Activated T-helper 2 cell treated with anti-CD3 and anti-CD28 coated beads, Interferon-gamma antibody, Interleukin-2, Interleukin-4, amounts not matched to agents 10 μg/mL and 5 μg/mL and 100 μg/mL, durations not matched to agents 14 hours and 24 hours and 36 hours (primary cell): ENCODE measurements at regions of chr20 and their contacts with region 1.

Region 1: DNA sequence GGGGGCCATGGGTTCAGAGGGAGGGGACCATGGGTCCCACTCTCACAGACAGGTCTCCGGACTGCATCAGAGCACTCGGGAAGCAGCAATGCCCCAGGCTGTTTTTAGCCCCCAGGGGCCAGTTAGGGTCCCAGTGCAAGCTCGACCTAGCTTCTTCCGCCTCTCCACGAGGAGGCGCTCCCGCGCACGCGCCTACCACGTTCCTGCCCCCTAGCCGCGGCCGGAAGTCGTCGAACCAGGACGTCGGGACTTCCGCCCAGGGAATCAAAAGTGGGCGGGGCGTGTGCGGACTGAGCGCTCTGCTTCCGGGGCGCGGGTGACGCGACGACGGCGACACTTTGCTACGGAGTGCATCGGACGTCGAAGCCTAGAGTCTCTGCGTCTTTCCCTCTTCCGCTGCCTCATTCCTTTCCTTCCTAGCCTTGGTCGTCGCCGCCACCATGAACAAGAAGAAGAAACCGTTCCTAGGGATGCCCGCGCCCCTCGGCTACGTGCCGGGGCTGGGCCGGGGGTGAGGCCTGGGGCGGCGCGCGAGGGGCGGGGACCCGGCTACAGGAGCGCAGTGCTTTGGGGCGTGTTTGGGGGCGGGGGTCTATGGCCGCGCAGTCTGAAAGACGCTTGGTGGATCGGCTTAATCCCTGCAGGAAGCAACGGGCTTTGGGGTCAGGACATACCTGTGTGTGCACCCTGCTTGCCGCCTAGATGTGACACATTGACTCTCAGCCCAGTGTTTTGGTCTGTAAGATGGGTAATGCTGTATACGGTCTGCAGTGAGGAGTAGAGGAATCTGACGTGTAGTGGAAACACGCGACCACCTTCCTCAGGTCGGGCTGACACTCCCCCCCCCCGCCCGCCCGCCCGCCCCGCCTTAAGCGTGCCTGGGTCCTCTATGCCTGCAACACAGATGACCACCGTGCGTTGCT is at the start of gene PRPF6:
- DNase-seq: peak; percentile 93
- H3K4me3 Mint-ChIP-seq: peak within 1 kb of the TSS; percentile 96
- H3K27ac Mint-ChIP-seq: peak within 1 kb of the TSS; percentile 99
- H3K4me1 Mint-ChIP-seq: peaks cover 55% of the 10 kb centered on the region
- H3K27me3 Mint-ChIP-seq: no peaks in the 10 kb centered on the region
- total RNA-seq, gene PRPF6: 68.9 and 70.3 TPM in 2 replicates

Region 2: GRCh38 chr20:63657937-63658748 is 322.9 kb before region 1 on chr20 and contains the start of gene RTEL1:
- intact Hi-C with region 1: loop called (anchors 5 kb)
- DNase-seq: peak; percentile 87
- H3K4me3 Mint-ChIP-seq: peak within 1 kb of the TSS; percentile 92
- H3K27ac Mint-ChIP-seq: peak within 1 kb of the TSS; percentile 86
- H3K4me1 Mint-ChIP-seq: peaks cover 18% of the 10 kb centered on the region
- H3K27me3 Mint-ChIP-seq: peaks cover 4% of the 10 kb centered on the region
- total RNA-seq, gene RTEL1: 44.0 and 46.9 TPM in 2 replicates

Region 3: DNA sequence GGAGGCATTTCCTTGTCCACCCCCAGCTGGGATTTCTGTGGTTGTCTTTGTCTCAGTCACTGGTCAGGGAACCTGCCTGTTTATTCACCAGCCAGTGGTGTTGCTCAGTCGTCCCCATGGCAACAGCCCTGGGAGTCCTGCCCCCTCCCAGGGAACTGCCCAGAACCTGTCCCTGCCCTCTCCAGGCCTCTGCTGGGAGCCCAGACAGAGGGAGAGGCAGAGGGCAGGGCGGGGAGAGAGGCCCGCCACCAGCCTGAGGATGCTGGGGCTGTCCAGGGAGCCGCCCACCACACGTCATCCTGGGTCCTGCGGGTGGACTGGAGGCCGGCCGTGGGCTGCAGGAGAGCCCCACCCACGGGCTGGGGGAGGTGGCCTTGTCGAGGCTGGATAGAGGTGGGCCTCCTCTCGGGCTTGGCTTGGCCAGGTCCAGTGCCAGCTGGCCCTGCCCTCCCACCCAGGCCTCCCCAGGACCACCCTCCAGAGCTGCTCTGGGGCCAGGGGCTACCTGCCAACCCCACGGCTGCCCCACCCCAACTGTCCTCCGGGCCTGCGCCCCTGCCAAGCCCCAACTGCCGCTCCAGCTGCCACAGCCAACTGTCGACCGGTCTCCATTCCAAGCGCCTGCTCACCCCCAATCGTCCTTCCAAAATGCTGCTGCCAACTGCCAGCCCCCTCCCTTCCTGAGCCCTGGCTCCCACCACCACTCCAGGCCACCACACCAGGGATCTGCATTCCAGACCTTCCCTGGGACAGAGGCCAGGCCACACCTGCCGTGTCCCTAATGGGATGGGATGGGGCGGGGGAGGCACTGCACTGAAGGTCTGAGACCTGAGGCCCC is 145.8 kb before region 1 on chr20:
- intact Hi-C with region 1: no loop called
- DNase-seq: no peak
- H3K4me3 Mint-ChIP-seq: no peak overlapping the region
- H3K27ac Mint-ChIP-seq: no peak overlapping the region
- H3K4me1 Mint-ChIP-seq: no peaks in the 10 kb centered on the region
- H3K27me3 Mint-ChIP-seq: peaks cover 10% of the 10 kb centered on the region

Region 4: DNA sequence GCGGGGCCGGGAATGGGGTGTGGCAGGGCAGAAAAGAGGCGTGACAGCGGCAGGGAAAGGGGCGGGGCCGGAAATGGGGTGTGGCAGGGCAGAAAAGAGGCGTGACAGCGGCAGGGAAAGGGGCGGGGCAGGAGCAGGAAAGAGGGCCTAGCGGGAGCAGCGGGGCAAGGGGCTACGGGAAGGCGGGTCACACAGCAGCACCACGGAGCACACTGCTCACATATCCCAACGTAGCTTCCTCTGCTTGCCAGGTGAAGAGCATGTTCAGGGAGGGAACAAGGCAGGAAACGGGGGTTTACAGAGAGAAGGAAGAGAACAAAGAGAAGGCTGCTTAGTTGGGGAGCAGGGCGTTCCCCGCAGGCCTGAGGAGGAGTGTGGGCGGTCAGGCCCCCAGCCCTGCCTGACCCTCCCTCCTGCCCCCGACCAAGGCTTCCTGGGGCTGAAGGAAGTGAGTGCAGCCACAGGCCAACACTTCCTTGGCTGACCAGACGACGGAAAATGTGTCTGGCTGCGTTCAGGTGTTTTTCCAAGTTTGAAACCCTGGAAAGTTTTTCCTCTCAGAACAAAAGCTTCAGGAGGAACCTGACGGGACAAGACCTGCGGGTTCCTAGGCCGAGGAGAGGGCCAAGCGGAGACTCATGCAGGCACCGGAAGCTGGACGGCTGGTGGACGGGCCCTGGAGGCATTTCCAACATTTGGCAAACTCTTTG is 38.7 kb before region 1 on chr20:
- intact Hi-C with region 1: no loop called
- DNase-seq: peak; percentile 54
- H3K4me3 Mint-ChIP-seq: no peak overlapping the region
- H3K27ac Mint-ChIP-seq: no peak overlapping the region
- H3K4me1 Mint-ChIP-seq: peaks cover 12% of the 10 kb centered on the region
- H3K27me3 Mint-ChIP-seq: no peaks in the 10 kb centered on the region

Region 5: DNA sequence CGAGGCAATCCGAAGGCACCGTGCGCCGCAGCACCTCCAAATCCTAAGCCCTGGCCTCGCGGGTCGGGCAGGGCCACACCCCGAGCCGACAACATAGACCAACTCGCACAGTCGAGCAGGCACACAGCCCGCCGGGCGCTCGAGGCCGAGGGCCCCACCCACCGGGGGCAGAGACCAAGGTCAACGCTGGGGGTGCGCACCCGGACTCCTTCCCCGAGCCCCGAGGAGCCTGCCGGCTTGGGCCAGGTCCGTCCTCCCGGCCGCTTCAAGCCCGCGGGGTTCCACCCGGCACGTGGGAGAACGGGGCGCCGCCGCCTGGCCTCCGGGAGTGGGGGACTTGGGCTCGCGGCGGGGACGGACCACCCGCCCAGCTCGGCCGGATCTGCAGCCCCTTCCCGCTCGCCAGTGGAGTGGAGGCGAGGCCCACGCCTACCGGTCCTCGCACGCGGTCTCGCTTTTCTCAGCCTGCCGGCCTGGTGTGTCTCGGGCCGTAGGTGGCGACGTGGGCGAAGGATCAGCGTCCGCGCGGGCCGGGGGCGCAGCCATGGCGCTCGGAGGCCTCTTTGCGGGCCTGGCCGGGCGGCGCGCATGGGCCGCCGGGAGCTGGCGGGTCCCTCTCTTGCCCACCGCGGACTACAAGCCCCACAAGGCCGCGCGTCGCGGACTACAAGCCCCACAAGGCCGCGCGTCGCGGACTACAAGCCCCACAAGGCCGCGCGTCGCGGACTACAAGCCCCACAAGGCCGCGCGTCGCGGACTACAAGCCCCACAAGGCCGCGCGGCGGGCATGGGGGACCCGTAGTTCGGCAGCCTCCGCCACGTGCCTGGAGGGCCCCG is 25.0 kb before region 1 on chr20 and contains the start of gene UCKL1:
- intact Hi-C with region 1: loop called (anchors 2 kb)
- DNase-seq: peak; percentile 88
- H3K4me3 Mint-ChIP-seq: peak within 1 kb of the TSS; percentile 84
- H3K27ac Mint-ChIP-seq: peak within 1 kb of the TSS; percentile 83
- H3K4me1 Mint-ChIP-seq: peaks cover 24% of the 10 kb centered on the region
- H3K27me3 Mint-ChIP-seq: no peaks in the 10 kb centered on the region
- total RNA-seq, gene UCKL1: 48.7 and 51.2 TPM in 2 replicates

Region 6: DNA sequence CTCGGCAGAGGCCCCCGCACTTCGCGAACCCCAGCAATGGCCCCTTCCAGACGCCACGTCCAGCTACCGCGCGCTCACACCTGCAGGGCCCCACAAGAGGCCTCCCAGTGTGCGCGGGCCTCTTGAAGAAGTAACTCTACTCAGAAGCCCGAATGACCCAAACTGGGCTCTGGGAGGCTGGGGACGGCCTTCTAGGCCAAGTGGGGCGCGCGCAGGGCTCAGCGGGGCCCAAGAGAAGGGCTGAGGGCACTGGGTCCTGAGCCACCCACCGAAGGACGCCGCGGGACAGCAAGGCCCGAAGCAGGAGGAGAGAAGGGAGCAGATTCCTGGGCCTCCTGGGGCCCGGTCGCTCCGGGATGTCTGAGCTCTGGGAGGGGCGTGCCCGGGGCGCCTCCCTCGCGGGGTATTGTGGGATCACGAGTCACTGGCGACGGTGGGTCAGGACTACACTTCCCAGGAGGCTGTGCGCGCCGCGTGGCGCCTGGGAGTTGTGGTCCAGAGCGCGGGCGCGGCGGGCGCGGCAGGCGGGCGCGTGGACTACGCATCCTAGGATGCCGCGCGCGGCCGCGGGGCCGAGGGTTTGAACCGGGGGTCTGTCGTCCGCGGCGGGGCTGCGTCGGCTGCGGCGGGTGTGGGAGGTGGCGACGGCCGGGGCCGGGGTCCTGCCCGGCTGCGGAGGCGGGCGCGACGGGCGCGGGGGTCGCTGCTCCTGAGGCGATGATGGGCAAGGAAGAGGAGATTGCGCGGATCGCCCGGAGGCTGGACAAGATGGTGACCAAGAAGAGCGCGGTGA is 81.7 kb after region 1 on chr20 and contains the start of gene TCEA2:
- intact Hi-C with region 1: loop called (anchors 1 kb)
- DNase-seq: peak; percentile 93
- H3K4me3 Mint-ChIP-seq: peak within 1 kb of the TSS; percentile 89
- H3K27ac Mint-ChIP-seq: peak within 1 kb of the TSS; percentile 88
- H3K4me1 Mint-ChIP-seq: peaks cover 46% of the 10 kb centered on the region
- H3K27me3 Mint-ChIP-seq: no peaks in the 10 kb centered on the region
- total RNA-seq, gene TCEA2: 49.0 and 49.9 TPM in 2 replicates

Region 7: DNA sequence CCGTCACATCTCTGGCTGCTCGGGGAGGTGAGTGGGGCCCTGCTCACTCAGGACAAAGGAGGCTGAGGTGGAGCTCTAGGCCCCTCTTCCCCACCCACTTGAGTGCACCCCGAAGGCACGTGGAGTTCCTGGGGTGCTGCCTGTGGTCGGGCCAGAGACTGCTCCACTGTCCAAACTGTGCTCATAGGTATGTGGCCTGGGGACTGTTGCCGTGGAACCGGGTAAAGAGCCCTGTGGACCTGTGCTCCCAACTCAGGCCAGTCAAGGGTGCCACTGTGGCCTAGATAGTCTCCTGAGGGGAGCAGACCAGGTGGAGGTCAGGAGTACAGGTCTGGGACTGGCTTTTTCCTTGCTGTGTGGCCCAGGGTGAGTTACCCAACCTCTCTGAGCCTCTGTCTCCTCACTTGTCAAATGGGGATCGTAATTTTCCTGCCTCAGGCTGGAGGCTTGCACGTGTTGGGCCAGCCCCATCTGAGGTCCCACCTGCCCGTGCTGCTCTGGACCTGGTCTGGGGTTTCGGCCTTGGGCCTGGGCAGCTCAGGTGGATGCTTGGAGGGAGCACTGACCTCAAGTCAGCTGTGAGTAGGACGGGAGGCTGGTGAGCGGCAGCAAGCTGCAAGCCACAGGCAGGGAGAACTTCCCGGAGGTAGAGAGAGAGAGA is 138.7 kb after region 1 on chr20:
- intact Hi-C with region 1: loop called (anchors 2 kb)
- DNase-seq: peak; percentile 25
- H3K4me3 Mint-ChIP-seq: peak overlapping the region; percentile 60
- H3K27ac Mint-ChIP-seq: no peak overlapping the region
- H3K4me1 Mint-ChIP-seq: peaks cover 9% of the 10 kb centered on the region
- H3K27me3 Mint-ChIP-seq: peaks cover 10% of the 10 kb centered on the region